Endothelial cell of umbilical vein (primary cell): ENCODE measurements at regions of chr2 and their contacts with region 1.

Region 1: GRCh38 chr2:11829947-11830707 is 83.7 kb downstream of the LPIN1 start:
- DNase-seq: peak; percentile 96
- H3K4me3 ChIP-seq: peak overlapping the region; percentile 13 to 47 (median 17)
- H3K27ac ChIP-seq: peak overlapping the region; percentile 73
- H3K4me1 ChIP-seq: peaks cover 30% of the 10 kb centered on the region
- H3K27me3 ChIP-seq: no peaks in the 10 kb centered on the region
- CTCF ChIP-seq: peak; percentile 27 to 43
- POLR2A ChIP-seq: no peak

Region 2: DNA sequence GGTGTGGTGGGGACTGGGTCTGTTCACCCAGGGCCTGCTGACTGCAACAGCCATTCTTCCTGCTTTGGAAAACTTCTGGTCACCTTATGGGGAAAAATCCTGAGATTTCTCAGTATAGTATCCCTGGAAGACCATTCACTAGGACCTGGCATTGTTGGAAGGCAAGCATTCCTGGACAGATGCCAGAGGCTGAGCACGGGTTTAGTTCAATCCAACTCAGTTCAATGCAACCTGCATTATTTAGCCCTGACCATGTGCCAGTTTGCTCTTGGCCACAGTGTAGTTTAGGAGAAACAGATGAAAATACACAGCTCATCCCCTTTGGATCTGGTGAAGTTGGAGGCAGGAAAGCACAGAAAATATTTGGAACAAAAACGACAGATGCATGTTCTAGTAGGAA is 12.2 kb after region 1 on chr2:
- CTCF ChIA-PET with region 1: no interaction called
- POLR2A ChIA-PET with region 1: no interaction called
- dilution Hi-C with region 1: no loop called
- intact Hi-C with region 1: no loop called
- DNase-seq: peak; percentile 21
- H3K4me3 ChIP-seq: no peak overlapping the region
- H3K27ac ChIP-seq: no peak overlapping the region
- H3K4me1 ChIP-seq: no peaks in the 10 kb centered on the region
- H3K27me3 ChIP-seq: peaks cover 2 to 11% of the 10 kb centered on the region in 2 experiments
- CTCF ChIP-seq: no peak
- POLR2A ChIP-seq: no peak

Region 3: DNA sequence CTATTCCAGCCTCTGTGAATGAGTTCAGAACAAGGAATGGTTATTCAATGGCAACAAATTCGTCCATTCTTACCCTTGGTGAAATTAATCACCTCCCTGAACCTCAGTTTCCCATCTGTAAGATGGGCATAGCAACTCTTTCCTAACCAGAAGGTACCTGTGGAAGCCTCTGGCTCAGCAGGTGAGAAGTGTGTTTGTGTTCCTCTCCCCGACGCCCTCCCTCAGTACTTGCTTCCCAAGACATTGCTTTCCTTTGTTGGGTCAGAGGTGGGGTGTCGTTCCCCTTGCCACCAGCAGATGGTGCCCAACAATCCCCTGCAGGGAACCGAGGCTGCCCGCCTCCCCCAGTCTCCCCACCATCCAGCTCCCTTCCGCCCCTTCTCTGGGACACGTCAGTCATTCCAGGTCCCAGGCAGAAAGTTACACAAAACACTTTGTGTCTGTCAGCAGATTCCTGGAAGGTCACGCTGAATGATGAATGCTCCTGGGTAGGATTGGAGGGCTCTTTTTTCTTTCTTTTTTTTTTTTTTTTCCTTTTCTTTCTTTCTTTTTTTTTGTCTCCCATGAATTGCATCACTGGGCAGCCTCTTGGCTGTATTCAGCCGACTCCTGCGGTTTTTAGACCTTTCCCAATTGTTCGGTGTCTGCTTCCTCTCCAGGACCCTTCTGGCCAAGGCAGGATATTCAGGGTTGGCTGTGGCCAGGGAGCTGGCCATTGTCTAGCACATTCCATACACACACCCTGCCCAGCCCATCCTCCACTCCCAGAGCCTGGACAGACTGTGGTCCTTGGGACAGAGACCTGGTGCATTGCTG is 33.6 kb after region 1 on chr2:
- CTCF ChIA-PET with region 1: interaction called, 6 read pairs
- POLR2A ChIA-PET with region 1: no interaction called
- dilution Hi-C with region 1: no loop called
- intact Hi-C with region 1: loop called (anchors 1 kb)
- DNase-seq: peak; percentile 88
- H3K4me3 ChIP-seq: no peak overlapping the region
- H3K27ac ChIP-seq: no peak overlapping the region
- H3K4me1 ChIP-seq: peaks cover 7% of the 10 kb centered on the region
- H3K27me3 ChIP-seq: peaks cover 3 to 11% of the 10 kb centered on the region in 2 experiments
- CTCF ChIP-seq: peak; percentile 80 to 93
- POLR2A ChIP-seq: no peak

Region 4: DNA sequence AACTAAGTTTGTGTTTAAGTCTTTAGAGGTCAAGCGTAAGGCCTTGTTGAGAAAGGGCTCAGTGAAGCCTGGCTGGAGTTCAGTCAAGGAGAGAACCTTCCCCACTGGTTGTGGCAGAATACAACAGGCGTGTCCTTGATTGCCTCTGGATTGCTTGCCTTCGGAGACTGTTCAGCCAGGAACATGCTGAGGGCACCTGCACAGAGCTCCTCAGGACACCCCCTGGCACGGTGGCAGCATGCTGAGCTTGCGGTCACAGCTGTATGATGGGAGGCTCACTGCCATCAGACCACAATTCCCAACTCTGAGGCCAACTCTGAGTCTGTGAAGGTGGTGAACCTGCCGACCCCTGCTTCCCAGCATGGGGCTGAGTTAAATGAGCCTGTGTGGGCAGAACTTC is 46.3 kb after region 1 on chr2:
- CTCF ChIA-PET with region 1: no interaction called
- POLR2A ChIA-PET with region 1: no interaction called
- dilution Hi-C with region 1: no loop called
- intact Hi-C with region 1: no loop called
- DNase-seq: no peak
- H3K4me3 ChIP-seq: no peak overlapping the region
- H3K27ac ChIP-seq: no peak overlapping the region
- H3K4me1 ChIP-seq: peaks cover 3% of the 10 kb centered on the region
- H3K27me3 ChIP-seq: no peaks in the 10 kb centered on the region
- CTCF ChIP-seq: no peak
- POLR2A ChIP-seq: no peak

Region 5: GRCh38 chr2:11945139-11946126 is 115.3 kb after region 1 on chr2:
- CTCF ChIA-PET with region 1: no interaction called
- POLR2A ChIA-PET with region 1: no interaction called
- dilution Hi-C with region 1: no loop called
- intact Hi-C with region 1: no loop called
- DNase-seq: no peak
- H3K4me3 ChIP-seq: no peak overlapping the region
- H3K27ac ChIP-seq: no peak overlapping the region
- H3K4me1 ChIP-seq: no peaks in the 10 kb centered on the region
- H3K27me3 ChIP-seq: no peaks in the 10 kb centered on the region
- CTCF ChIP-seq: no peak
- POLR2A ChIP-seq: no peak

Region 6: GRCh38 chr2:12155303-12156051 is 325.4 kb after region 1 on chr2:
- CTCF ChIA-PET with region 1: interaction called, 5 read pairs
- POLR2A ChIA-PET with region 1: no interaction called
- dilution Hi-C with region 1: no loop called
- intact Hi-C with region 1: loop called (anchors 1 kb)
- DNase-seq: peak; percentile 97
- H3K4me3 ChIP-seq: no peak overlapping the region
- H3K27ac ChIP-seq: peak overlapping the region; percentile 85
- H3K4me1 ChIP-seq: peaks cover 21% of the 10 kb centered on the region
- H3K27me3 ChIP-seq: peaks cover 0 to 2% of the 10 kb centered on the region in 2 experiments
- CTCF ChIP-seq: no peak
- POLR2A ChIP-seq: peak; percentile 36

Region 7: DNA sequence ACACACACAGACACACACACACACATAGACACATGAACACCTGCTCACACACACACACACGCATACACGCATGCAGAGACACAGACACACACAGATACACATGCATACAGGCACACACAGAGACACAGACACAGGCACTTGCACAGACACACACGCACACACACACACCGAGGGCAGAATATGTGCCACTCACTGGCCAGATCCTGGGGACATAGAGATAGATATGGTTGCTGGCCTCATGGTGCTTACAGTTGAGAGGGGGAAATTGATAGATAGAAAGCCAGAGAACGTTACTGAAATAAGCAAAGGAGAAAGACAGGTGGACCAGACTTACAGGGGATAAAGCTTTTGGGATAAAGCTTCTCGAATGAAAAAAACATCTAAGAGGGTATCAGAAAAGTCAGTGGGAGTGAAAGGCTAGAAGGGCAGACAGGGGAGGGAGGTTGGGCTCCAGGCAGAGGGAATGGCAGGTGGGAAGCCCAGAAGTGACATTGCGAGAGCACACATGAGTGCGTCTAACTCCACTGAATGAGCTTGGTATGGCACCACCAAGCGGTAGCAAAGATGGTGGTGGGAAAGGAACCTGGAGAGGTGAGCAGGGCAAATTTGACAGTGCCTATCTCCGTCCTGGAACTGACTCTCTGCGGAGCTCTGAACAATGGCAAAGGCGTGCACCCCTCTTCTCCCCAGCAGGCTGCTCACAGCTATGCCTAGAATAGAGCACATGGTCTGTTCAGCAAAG is 496.5 kb after region 1 on chr2:
- CTCF ChIA-PET with region 1: no interaction called
- POLR2A ChIA-PET with region 1: no interaction called
- dilution Hi-C with region 1: no loop called
- intact Hi-C with region 1: loop called (anchors 5 kb)
- DNase-seq: no peak
- H3K4me3 ChIP-seq: no peak overlapping the region
- H3K27ac ChIP-seq: no peak overlapping the region
- H3K4me1 ChIP-seq: peaks cover 8% of the 10 kb centered on the region
- H3K27me3 ChIP-seq: no peaks in the 10 kb centered on the region
- CTCF ChIP-seq: no peak
- POLR2A ChIP-seq: no peak

Region 8: DNA sequence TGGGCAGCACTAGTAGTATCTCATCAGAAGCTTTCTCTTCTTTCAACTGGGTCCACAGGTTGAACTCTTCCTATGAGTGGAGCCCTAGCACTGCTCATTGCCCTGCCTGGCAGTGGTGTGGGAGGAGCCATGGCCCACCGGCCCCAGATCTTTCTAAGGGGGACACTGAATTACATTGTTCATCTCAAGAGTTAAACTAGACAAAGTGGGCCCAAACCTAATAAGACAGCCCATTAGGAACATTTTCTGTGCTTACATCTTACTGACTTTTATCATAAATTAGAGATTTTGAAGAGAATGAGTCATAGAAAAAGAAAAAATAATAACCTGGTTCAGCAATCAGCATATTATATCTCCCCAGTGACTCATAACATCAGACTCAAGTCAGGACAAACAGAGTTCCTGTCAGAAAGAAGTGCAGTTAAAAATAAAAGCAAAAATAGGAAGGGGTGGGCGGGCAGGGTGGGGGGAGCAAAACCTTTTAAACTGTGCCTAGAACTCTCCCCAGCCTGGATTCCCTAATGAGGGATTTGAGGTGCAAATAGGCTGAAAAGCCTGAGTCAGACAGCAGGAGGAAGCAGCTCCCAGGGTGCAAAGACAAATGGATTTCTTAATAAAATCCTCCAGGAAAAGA is 725.0 kb after region 1 on chr2:
- CTCF ChIA-PET with region 1: interaction called, 5 read pairs
- POLR2A ChIA-PET with region 1: no interaction called
- dilution Hi-C with region 1: no loop called
- intact Hi-C with region 1: loop called (anchors 5 kb)
- DNase-seq: peak; percentile 85
- H3K4me3 ChIP-seq: no peak overlapping the region
- H3K27ac ChIP-seq: no peak overlapping the region
- H3K4me1 ChIP-seq: peaks cover 23% of the 10 kb centered on the region
- H3K27me3 ChIP-seq: no peaks in the 10 kb centered on the region
- CTCF ChIP-seq: no peak
- POLR2A ChIP-seq: no peak

Region 9: DNA sequence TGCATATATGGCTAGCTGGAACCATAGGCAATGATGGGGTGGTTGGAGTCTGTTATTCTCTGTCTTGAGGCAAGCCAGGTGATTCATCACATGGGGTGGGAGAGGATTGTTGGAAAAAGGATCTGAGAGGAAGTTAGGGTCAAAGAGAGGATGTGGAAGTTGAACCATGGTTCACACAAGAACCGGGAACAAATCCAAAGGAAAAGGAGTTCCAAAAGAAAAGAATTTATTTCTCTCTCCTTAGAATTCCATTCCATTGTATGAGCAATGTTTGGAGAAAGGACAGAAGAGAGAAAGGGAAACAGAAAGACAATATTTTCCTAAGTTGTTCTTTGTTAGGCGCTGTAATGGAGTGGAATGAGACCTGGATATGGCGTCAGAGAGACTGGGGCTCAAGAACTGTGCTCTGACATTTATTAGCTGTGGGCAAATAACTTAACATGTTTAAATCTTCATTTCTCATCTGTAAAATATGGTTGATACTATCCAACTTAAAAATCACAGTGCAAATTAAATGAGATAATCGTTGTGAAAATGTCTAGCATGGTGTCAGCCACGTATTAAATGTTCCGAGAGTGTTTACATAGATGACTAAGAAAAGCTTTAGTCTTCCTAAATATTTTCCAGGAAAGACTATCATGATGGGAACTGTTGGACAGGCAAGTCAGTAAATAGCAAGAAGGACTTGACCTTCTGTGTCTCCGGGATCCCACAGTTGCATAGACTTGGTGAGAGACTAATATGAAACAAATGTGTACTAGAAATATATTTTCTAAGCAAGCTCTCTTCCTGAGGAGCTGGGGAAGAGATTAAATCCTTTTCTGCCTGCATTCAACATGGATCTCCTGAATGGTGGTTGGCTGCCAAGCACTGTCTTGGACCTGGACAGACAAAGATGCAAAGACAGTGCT is 958.0 kb after region 1 on chr2:
- CTCF ChIA-PET with region 1: interaction called, 3 read pairs
- POLR2A ChIA-PET with region 1: no interaction called
- dilution Hi-C with region 1: no loop called
- intact Hi-C with region 1: loop called (anchors 1 kb)
- DNase-seq: peak; percentile 96
- H3K4me3 ChIP-seq: peak overlapping the region in 1 of 3 experiments; percentile 51
- H3K27ac ChIP-seq: peak overlapping the region; percentile 99
- H3K4me1 ChIP-seq: peaks cover 20% of the 10 kb centered on the region
- H3K27me3 ChIP-seq: no peaks in the 10 kb centered on the region
- CTCF ChIP-seq: no peak
- POLR2A ChIP-seq: no peak

Region 10: GRCh38 chr2:12856934-12857601 is 1026.9 kb after region 1 on chr2:
- CTCF ChIA-PET with region 1: interaction called, 3 read pairs
- POLR2A ChIA-PET with region 1: no interaction called
- dilution Hi-C with region 1: no loop called
- intact Hi-C with region 1: loop called (anchors 1 kb)
- DNase-seq: peak; percentile 81
- H3K4me3 ChIP-seq: peak overlapping the region in 1 of 3 experiments; percentile 23
- H3K27ac ChIP-seq: peak overlapping the region; percentile 91
- H3K4me1 ChIP-seq: peaks cover 27% of the 10 kb centered on the region
- H3K27me3 ChIP-seq: no peaks in the 10 kb centered on the region
- CTCF ChIP-seq: no peak
- POLR2A ChIP-seq: peak; percentile 38